Posterior vena cava (tissue), 2 donors: ENCODE measurements at regions of chr22 and their contacts with region 1.

Region 1: DNA sequence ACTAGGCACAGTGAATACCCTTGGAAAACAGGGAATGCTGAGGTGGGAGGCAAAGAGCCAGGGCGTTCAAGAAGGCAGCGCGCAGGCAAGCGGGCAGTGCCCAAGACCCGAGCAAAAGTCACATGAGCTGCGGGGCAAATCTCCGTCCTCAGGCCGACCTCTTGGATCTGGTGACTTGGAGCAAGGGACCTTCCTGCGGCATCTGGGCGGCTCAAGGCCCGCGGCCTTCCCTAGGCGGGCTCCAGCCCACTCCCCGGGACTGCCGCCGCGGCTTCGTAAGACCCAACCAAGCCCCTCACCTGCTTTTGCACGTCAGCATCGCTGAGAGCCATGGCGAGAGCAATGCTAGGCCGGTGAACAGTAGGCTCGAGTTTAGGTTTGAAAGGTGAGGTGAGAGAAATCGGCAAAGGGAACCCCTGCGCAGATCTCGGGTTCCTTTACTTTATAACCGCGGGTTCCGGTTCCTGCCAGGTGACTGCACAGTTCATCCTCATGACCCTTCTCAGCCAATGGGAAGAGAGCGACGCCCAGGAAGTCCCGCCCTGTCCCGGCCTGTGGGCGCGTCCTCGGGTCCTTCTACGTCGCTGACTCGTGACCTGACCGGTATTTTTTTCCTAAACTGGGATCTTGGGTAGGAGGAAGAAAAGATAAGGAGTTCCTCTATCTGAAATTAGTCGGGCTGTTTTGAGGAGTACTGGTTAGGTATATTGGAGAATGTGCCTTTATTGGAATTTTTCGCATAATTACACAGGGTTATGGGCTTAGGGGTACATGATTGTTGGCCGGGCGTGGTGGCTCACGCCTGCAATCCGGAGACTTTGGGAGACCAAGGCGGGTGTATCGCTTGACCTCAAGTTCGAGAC is at the start of gene ATP6V1E1:
- DNase-seq: peak; percentile 98
- total RNA-seq, gene ATP6V1E1: 116 to 126 TPM

Region 2: DNA sequence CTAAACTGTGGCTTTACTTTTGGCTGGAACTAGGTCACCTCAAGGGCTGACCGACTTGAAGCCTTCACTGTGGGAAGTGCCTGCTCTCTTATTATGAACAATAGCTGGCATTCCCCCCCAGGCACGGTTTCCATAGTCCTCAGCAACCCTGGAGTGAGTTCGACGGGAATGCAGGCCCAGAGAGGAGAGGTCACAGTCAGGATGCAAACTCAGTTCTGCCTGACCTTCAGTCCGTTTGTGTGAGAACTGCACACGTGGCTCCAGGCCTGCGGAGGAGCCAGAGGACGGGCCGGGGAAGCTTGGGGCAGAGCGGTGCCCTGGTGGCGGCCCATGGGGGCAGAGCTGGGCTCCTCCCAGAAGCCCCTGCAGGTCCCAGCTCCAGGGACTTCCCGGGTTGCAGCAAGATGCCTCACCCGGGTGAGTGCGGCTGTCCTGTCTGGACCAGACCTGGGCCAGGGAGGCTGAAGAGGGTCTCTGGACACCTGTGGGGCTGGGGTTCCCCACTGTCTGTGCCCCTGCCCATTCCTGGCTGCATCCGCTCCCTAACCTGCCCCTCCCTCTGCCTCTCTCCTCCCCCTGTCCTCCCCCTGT is 48.0 kb before region 1 on chr22:
- intact Hi-C with region 1: no loop called
- DNase-seq: peak; percentile 69

Region 3: DNA sequence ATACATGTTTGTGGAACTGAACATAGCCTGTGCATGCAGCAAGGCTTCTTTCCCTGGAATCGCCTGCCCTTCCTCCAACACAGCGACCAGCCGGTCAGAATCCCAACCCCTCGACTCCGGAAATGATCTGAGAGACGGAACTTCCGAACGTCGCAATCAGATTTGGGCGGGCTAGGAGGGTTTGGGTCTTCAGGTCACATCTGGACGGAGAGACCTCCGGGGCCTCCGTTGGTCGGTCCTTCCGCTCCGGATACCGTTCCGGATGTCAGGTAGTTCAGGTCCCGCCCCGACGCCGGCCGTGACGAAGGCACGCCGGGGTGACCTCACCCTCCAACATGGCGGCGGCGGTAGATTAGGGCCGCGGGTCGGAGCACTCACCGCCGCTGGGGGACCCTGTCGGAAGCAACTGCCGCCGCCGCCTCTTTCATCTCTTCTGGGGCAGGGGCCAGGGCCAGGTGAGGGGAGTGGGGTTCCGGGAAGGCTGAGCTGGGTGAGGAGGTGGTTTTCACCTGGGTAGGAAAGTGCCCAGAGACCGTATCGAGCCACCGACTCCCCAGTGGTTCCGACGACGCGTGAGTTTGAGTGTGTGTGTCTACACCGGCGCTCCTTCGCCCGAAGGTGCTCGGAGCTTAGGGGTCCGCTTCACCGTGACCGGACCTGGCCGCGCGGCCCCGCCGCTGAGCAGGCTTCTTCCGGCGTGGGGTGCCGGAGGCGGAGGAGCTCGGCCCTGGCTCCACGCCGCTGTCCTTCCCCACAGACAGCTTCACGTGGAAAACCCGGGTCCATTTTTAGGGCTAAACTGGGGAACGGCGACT is 10.1 kb after region 1 on chr22 and contains the start of gene BCL2L13:
- intact Hi-C with region 1: loop called in 1 of 2 experiments (anchors 1 kb)
- DNase-seq: peak; percentile 97
- total RNA-seq, gene BCL2L13: 28.9 to 34.7 TPM

Region 4: GRCh38 chr22:17665854-17666253 is 37.3 kb after region 1 on chr22:
- intact Hi-C with region 1: no loop called
- DNase-seq: no peak

Region 5: GRCh38 chr22:17734187-17734586 is 105.7 kb after region 1 on chr22:
- intact Hi-C with region 1: no loop called
- DNase-seq: peak; percentile 8